ENCODE measurements at regions of chr14 and their contacts with region 1.

Region 1: GRCh38 chr14:22570132-22570949 is 18.7 kb downstream of the DAD1 start:
- DNase-seq: peak; percentile 79 to 87 (median 82)
- ATAC-seq: peak; percentile 86
- H3K4me3 ChIP-seq: no peak overlapping the region
- H3K27ac ChIP-seq: peak overlapping the region in 3 of 4 donors; percentile 53 to 76 (median 61)
- H3K4me1 ChIP-seq: peaks cover 35% of the 10 kb centered on the region
- H3K27me3 ChIP-seq: no peaks in the 10 kb centered on the region
- CTCF ChIP-seq: peak; percentile 69 to 95 (median 88)
- POLR2A ChIP-seq: no peak

Region 2: GRCh38 chr14:22505697-22506377 is 64.5 kb before region 1 on chr14:
- intact Hi-C with region 1: no loop called
- DNase-seq: no peak
- ATAC-seq: no peak
- H3K4me3 ChIP-seq: no peak overlapping the region
- H3K27ac ChIP-seq: no peak overlapping the region
- H3K4me1 ChIP-seq: peaks cover 8% of the 10 kb centered on the region
- H3K27me3 ChIP-seq: no peaks in the 10 kb centered on the region
- CTCF ChIP-seq: no peak
- POLR2A ChIP-seq: no peak

Region 3: DNA sequence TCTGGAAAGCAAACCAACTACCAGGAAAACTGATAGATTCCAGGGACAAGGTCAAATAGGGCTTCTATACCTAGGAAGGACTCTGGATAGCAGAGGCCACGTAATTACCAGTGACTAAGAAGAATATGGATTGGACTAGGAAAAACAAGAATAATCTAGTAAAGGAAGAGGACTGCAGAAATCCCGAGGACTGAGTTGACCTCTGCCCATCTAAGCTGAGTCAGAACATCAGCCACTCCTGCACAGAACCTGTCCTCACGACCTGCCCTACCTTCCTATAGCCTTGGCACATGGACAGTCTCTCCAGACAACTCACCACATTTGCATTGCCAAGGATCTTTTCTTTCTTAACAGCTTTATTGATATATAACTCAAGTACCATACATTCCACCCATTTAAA is 71.5 kb after region 1 on chr14:
- intact Hi-C with region 1: loop called (anchors 5 kb)
- DNase-seq: no peak
- ATAC-seq: no peak
- H3K4me3 ChIP-seq: no peak overlapping the region
- H3K27ac ChIP-seq: no peak overlapping the region
- H3K4me1 ChIP-seq: no peaks in the 10 kb centered on the region
- H3K27me3 ChIP-seq: no peaks in the 10 kb centered on the region
- CTCF ChIP-seq: no peak
- POLR2A ChIP-seq: no peak

Region 4: DNA sequence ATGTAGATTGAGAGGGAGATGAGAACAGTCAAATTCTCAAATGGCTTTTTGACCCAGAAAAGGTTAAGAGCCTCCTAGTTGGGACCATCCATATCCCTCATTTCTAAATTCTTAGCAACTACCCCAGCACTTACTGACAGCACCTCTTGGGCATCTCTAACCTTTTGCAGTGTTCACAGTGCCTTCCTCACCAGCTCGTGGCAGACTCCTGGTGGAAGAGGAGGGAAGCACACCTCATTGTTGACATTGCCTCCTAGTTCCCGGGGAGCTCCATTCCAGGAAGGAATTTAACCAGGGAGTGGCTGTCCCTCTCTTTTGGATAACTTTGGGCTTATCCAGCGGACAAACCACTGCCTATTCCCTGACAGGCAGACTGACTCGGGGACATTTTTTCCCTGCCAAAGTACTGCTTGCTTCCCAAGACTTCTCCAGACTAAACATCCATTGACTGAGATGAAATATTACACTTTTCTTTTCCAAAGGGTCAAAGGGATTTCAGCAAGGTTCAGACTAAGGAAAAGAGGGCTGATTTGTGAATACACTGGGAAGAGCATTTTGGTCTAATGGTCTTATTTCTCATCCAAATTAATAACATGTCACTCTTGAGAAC is 82.8 kb after region 1 on chr14:
- intact Hi-C with region 1: loop called (anchors 5 kb)
- DNase-seq: peak; percentile 74 to 79 (median 78)
- ATAC-seq: peak; percentile 94
- H3K4me3 ChIP-seq: no peak overlapping the region
- H3K27ac ChIP-seq: no peak overlapping the region
- H3K4me1 ChIP-seq: no peaks in the 10 kb centered on the region
- H3K27me3 ChIP-seq: no peaks in the 10 kb centered on the region
- CTCF ChIP-seq: peak; percentile 64 to 92 (median 85)
- POLR2A ChIP-seq: no peak

Region 5: DNA sequence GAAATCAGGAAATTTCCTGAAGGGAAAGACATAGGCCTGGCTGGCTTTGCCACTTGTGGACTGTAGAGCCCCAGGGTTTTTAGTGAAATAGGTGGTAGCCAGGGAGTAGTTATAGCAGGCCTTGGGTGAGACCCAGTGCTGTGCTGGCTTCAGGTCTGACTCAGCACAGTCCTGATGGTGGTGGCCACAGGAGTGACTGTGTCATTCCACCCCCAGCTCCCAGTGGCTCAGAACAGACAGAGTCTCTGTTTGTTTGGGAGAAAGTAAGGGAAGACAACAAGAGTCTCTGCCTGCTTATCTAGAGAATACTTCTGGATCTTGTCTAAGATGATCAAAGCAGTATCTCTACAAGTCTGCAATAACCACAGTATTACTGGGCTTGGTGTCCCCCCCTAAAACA is 101.3 kb after region 1 on chr14:
- intact Hi-C with region 1: no loop called
- DNase-seq: no peak
- ATAC-seq: no peak
- H3K4me3 ChIP-seq: no peak overlapping the region
- H3K27ac ChIP-seq: no peak overlapping the region
- H3K4me1 ChIP-seq: no peaks in the 10 kb centered on the region
- H3K27me3 ChIP-seq: no peaks in the 10 kb centered on the region
- CTCF ChIP-seq: no peak
- POLR2A ChIP-seq: no peak